HEK293 (cell line): ENCODE measurements at regions of chrX and their contacts with region 1.

Region 1: DNA sequence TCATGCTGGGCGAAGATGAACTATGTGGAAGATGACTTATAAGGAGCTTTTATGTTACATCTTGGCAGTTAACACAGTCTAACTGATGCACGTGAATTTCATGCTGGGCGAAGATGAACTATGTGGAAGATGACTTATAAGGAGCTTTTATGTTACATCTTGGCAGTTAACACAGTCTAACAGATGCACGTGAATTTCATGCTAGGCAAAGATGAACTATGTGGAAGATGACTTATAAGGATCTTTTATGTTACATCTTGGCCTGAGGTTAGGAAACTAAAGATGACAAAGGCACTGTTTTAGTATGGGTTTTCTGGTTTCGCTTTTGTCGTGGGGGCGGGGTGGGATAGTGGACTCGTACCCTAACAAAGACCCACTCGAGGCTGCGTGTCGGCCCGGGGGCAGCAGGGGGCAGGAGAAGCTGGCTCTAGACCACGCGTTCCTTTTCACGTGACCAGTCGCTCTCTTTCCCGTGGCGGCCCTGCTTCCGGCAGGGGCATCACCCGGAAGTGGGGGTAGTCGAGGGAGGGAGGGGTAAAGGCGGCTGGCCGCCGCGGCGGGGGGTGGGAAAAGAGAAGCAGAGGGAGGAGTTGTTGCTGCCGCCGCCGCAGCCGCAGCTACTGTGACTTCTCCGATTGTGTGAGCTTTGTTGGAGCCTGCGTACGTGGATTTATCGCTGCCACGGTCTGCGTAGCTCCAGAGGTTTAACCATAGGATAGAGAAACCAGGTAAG is at the start of gene ATP7A:
- H3K4me3 ChIP-seq: peak within 1 kb of the TSS; percentile 44
- H3K27ac ChIP-seq: peak within 1 kb of the TSS; percentile 73
- H3K4me1 ChIP-seq: no peaks in the 10 kb centered on the region
- CTCF ChIP-seq: peak; percentile 71; the same call in 1 of the 2 replicates

Region 2: DNA sequence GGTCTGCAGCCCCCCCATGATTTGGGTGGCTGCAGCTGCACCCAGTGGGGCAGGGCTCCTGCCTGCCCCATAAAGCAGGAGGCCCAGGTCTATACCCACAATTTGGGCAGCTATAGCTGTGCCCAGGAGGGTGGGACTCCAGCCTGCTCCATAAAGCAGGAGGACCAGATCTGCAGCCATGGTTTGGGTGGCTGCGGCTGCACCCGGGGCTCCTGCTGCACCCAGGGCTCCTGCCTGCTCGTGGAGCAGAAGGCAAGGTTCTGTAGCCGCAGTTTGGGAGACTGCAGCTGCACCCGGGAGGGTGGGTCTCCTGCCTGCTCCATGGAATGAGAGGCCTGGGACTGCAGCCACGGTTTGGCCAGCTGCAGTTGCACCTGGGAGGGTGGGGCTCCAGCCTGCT is 205.4 kb before region 1 on chrX:
- CTCF ChIA-PET with region 1: no interaction called
- POLR2A ChIA-PET with region 1: no interaction called
- H3K4me3 ChIP-seq: no peak overlapping the region
- H3K27ac ChIP-seq: no peak overlapping the region
- H3K4me1 ChIP-seq: no peaks in the 10 kb centered on the region
- CTCF ChIP-seq: no peak

Region 3: GRCh38 chrX:77899081-77899828 is 11.0 kb before region 1 on chrX and contains the start of gene COX7B:
- CTCF ChIA-PET with region 1: interaction called, 12 read pairs
- POLR2A ChIA-PET with region 1: interaction called, 43 read pairs
- H3K4me3 ChIP-seq: peak within 1 kb of the TSS; percentile 47
- H3K27ac ChIP-seq: peak within 1 kb of the TSS; percentile 75
- H3K4me1 ChIP-seq: no peaks in the 10 kb centered on the region
- CTCF ChIP-seq: no peak; the same call in 1 of the 2 replicates